Naive thymus-derived CD4-positive, alpha-beta T cell (primary cell): ENCODE measurements at regions of chr1 and their contacts with region 1.

Region 1: DNA sequence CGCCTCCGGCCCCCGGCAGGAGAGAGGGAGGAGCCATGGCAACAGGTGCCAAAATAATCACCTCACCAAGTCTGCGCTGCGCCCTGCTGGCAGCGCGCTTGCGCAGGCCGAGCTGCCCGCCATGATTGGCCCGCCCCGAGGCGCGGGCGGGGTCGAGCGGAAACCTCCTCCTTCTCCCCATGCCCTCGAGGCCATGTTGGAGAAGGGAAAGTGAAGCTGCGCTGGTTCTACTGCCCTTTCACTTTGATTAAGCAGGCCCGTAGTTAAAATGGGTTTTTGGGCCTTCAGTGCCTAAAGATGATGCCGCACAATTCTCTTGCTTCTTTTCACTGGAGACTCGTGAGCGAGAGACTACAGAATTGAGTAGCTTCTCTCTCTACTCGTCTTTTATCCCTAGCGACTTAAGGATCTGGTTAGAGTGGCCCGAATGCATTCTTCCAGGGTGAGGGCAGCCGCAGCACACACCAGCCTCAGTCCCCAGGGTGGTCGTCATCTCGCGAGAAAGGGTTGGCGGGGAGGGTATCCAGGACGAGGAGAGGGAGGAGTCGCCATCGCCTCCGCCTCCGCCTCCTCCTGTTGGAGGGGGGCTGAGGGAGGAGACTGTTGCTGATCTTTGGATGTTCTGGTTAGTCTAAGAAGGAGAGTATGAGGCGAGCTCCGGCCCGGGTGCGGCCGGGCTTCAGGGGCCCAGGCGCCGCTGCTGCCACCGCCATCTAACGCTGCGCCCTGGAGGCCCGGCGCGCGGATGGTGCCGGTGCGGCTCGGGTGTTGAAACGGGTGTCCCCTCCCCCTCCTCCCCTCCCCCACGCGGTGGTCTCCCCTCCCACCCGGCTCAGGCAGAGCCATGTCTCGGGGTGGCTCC is at the start of gene DCAF6:
- DNase-seq: peak; percentile 94 to 99 (median 99)
- ATAC-seq: peak; percentile 89
- H3K4me3 ChIP-seq: peak within 1 kb of the TSS; percentile 89
- H3K4me3 Mint-ChIP-seq: peak within 1 kb of the TSS; percentile 90 to 99 (median 96)
- H3K27ac ChIP-seq: peak within 1 kb of the TSS; percentile 89
- H3K27ac Mint-ChIP-seq: peak within 1 kb of the TSS; percentile 90 to 100 (median 99)
- H3K4me1 ChIP-seq: peaks cover 18 to 31% of the 10 kb centered on the region in 2 donors
- H3K4me1 Mint-ChIP-seq: peaks cover 29 to 58% (median 40%) of the 10 kb centered on the region in 7 donors
- H3K27me3 ChIP-seq: no peaks in the 10 kb centered on the region
- H3K27me3 Mint-ChIP-seq: no peaks in the 10 kb centered on the region
- total RNA-seq, gene DCAF6: 27.4 to 32.7 (median 29.1) TPM

Region 2: DNA sequence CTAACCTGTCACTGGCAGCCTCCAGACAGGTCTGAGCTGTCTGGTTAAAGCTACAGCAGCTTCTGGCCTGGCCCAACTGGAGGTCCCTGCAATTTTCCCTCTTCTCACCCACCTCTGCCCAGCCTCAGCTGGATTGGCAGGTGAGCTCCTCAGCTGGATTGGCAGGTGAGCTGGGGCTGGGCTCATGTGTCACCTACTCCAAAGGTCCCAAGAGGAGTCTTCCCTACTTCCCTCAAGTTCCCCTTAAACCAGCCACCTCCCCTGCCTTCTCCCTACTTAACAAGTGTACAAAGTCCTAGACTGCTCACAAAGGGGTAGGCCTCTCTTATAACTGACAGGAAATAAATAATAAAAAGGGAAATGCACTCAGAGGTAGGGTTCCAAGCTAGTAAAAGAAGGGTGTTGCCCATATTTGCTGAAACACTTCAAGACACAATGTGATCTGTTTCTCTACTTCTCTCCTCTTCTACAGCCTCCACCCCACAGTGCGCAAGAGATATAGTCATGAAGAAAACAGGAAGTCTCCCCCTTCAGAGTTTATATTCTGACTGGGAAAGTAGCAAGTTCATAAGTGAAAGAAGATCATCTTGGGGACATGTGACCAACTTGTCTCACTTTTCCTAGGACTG is 845.9 kb before region 1 on chr1 and contains the start of gene GPA33:
- CTCF ChIA-PET with region 1: no interaction called
- POLR2A ChIA-PET with region 1: no interaction called
- intact Hi-C with region 1: loop called in 1 of 2 experiments (anchors 2 kb)
- DNase-seq: peak in 7 of 9 donors; percentile 71 to 89 (median 83)
- ATAC-seq: peak; percentile 95
- H3K4me3 ChIP-seq: peak within 1 kb of the TSS; percentile 45
- H3K4me3 Mint-ChIP-seq: peak within 1 kb of the TSS in 9 of 10 donors; percentile 63 to 93 (median 86)
- H3K27ac ChIP-seq: peak within 1 kb of the TSS; percentile 83
- H3K27ac Mint-ChIP-seq: peak within 1 kb of the TSS; percentile 95 to 100 (median 100)
- H3K4me1 ChIP-seq: peaks cover 25 to 33% of the 10 kb centered on the region in 2 donors
- H3K4me1 Mint-ChIP-seq: peaks cover 18 to 80% (median 34%) of the 10 kb centered on the region in 7 donors
- H3K27me3 ChIP-seq: no peaks in the 10 kb centered on the region
- H3K27me3 Mint-ChIP-seq: no peaks in the 10 kb centered on the region
- total RNA-seq, gene GPA33: 5.4 to 32.6 (median 11.3) TPM

Region 3: GRCh38 chr1:167627865-167628641 is 308.2 kb before region 1 on chr1:
- CTCF ChIA-PET with region 1: no interaction called
- POLR2A ChIA-PET with region 1: interaction called, 4 read pairs
- intact Hi-C with region 1: loop called (anchors 1 to 5 kb)
- DNase-seq: peak; percentile 33 to 84 (median 73)
- ATAC-seq: peak; percentile 84
- H3K4me3 ChIP-seq: peak overlapping the region; percentile 48
- H3K4me3 Mint-ChIP-seq: peak overlapping the region; percentile 82 to 99 (median 92)
- H3K27ac ChIP-seq: peak overlapping the region; percentile 94
- H3K27ac Mint-ChIP-seq: peak overlapping the region; percentile 85 to 98 (median 95)
- H3K4me1 ChIP-seq: peaks cover 44 to 46% of the 10 kb centered on the region in 2 donors
- H3K4me1 Mint-ChIP-seq: peaks cover 48 to 69% (median 63%) of the 10 kb centered on the region in 7 donors
- H3K27me3 ChIP-seq: no peaks in the 10 kb centered on the region
- H3K27me3 Mint-ChIP-seq: no peaks in the 10 kb centered on the region

Region 4: DNA sequence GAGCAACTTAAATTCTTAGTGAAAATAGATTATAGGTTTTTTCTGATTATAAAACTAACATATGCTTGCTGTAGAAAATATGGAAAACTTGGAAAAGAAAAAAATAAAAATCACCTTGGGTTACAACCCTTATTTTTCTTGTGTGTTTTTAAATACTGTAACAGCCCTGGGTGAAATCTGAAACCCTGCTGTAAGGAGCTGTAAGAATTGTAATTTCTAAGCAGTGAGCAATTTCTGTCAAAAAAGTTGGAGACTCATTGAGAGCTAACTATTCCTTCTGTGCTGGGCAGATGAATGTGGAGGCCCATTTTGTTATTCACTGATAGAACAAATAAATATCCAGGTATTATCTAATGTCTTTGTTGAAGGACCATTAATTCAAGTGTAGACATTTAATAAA is 65.0 kb before region 1 on chr1:
- CTCF ChIA-PET with region 1: no interaction called
- POLR2A ChIA-PET with region 1: no interaction called
- intact Hi-C with region 1: no loop called
- DNase-seq: no peak
- ATAC-seq: no peak
- H3K4me3 ChIP-seq: no peak overlapping the region
- H3K4me3 Mint-ChIP-seq: no peak overlapping the region
- H3K27ac ChIP-seq: no peak overlapping the region
- H3K27ac Mint-ChIP-seq: no peak overlapping the region
- H3K4me1 ChIP-seq: no peaks in the 10 kb centered on the region
- H3K4me1 Mint-ChIP-seq: no peaks in the 10 kb centered on the region
- H3K27me3 ChIP-seq: no peaks in the 10 kb centered on the region
- H3K27me3 Mint-ChIP-seq: no peaks in the 10 kb centered on the region

Region 5: GRCh38 chr1:167899253-167899681 is 37.0 kb before region 1 on chr1:
- CTCF ChIA-PET with region 1: no interaction called
- POLR2A ChIA-PET with region 1: no interaction called
- intact Hi-C with region 1: no loop called
- DNase-seq: no peak
- ATAC-seq: no peak
- H3K4me3 ChIP-seq: no peak overlapping the region
- H3K4me3 Mint-ChIP-seq: no peak overlapping the region
- H3K27ac ChIP-seq: no peak overlapping the region
- H3K27ac Mint-ChIP-seq: no peak overlapping the region
- H3K4me1 ChIP-seq: no peaks in the 10 kb centered on the region
- H3K4me1 Mint-ChIP-seq: no peaks in the 10 kb centered on the region
- H3K27me3 ChIP-seq: no peaks in the 10 kb centered on the region
- H3K27me3 Mint-ChIP-seq: peaks cover 0 to under 1% (median 0%) of the 10 kb centered on the region in 5 donors

Region 6: DNA sequence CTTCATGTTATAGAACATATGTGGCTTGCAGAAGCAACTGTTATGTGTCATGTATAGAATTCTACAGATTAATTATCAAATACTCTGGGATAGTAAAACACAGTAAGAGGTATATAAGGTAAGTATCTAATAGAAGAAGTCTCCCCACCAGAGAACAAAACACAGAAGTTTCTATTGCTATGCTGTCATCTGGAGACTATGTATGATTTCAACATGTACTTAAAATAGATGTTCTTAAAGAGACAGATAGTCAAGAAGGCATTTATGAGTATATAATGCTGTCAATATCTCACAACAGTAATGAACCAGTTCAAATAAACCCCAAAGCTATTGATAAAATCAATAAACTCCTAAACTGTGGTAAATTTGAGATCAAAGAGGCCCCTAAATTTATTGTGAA is 14.3 kb before region 1 on chr1:
- CTCF ChIA-PET with region 1: no interaction called
- POLR2A ChIA-PET with region 1: interaction called, 3 read pairs
- intact Hi-C with region 1: loop called (anchors 1 to 2 kb)
- DNase-seq: no peak
- ATAC-seq: no peak
- H3K4me3 ChIP-seq: no peak overlapping the region
- H3K4me3 Mint-ChIP-seq: no peak overlapping the region
- H3K27ac ChIP-seq: no peak overlapping the region
- H3K27ac Mint-ChIP-seq: no peak overlapping the region
- H3K4me1 ChIP-seq: no peaks in the 10 kb centered on the region
- H3K4me1 Mint-ChIP-seq: peaks cover 3 to 23% (median 12%) of the 10 kb centered on the region in 7 donors
- H3K27me3 ChIP-seq: no peaks in the 10 kb centered on the region
- H3K27me3 Mint-ChIP-seq: no peaks in the 10 kb centered on the region

Region 7: GRCh38 chr1:167991546-167991945 is 55.2 kb after region 1 on chr1:
- CTCF ChIA-PET with region 1: interaction called, 4 read pairs
- POLR2A ChIA-PET with region 1: no interaction called
- intact Hi-C with region 1: loop called in 1 of 2 experiments (anchors 5 kb)
- DNase-seq: no peak
- ATAC-seq: no peak
- H3K4me3 ChIP-seq: no peak overlapping the region
- H3K4me3 Mint-ChIP-seq: no peak overlapping the region
- H3K27ac ChIP-seq: no peak overlapping the region
- H3K27ac Mint-ChIP-seq: peak overlapping the region in 1 of 9 donors; percentile 62
- H3K4me1 ChIP-seq: no peaks in the 10 kb centered on the region
- H3K4me1 Mint-ChIP-seq: peaks cover 0 to 7% (median 0%) of the 10 kb centered on the region in 7 donors
- H3K27me3 ChIP-seq: no peaks in the 10 kb centered on the region
- H3K27me3 Mint-ChIP-seq: no peaks in the 10 kb centered on the region

Region 8: GRCh38 chr1:168225476-168226190 is 289.3 kb after region 1 on chr1 and contains the start of gene SFT2D2:
- CTCF ChIA-PET with region 1: no interaction called
- POLR2A ChIA-PET with region 1: interaction called, 3 read pairs
- intact Hi-C with region 1: loop called (anchors 5 kb)
- DNase-seq: peak; percentile 71 to 86 (median 83)
- ATAC-seq: peak; percentile 97
- H3K4me3 ChIP-seq: peak within 1 kb of the TSS; percentile 88
- H3K4me3 Mint-ChIP-seq: peak within 1 kb of the TSS; percentile 92 to 98 (median 96)
- H3K27ac ChIP-seq: peak within 1 kb of the TSS; percentile 85
- H3K27ac Mint-ChIP-seq: peak within 1 kb of the TSS; percentile 81 to 98 (median 92)
- H3K4me1 ChIP-seq: peaks cover 14 to 15% of the 10 kb centered on the region in 2 donors
- H3K4me1 Mint-ChIP-seq: peaks cover 30 to 56% (median 45%) of the 10 kb centered on the region in 7 donors
- H3K27me3 ChIP-seq: no peaks in the 10 kb centered on the region
- H3K27me3 Mint-ChIP-seq: peaks cover 0 to 7% (median 4%) of the 10 kb centered on the region in 5 donors
- total RNA-seq, gene SFT2D2: 46.9 to 79.8 (median 51.3) TPM

Region 9: GRCh38 chr1:169794530-169795416 is 1858.5 kb after region 1 on chr1 and contains the start of gene METTL18:
- CTCF ChIA-PET with region 1: no interaction called
- POLR2A ChIA-PET with region 1: interaction called, 6 read pairs
- intact Hi-C with region 1: loop called in 1 of 2 experiments (anchors 2 kb)
- DNase-seq: peak; percentile 72 to 96 (median 92)
- ATAC-seq: peak; percentile 100
- H3K4me3 ChIP-seq: peak within 1 kb of the TSS; percentile 98
- H3K4me3 Mint-ChIP-seq: peak within 1 kb of the TSS; percentile 90 to 100 (median 100)
- H3K27ac ChIP-seq: peak within 1 kb of the TSS; percentile 94
- H3K27ac Mint-ChIP-seq: peak within 1 kb of the TSS; percentile 97 to 100 (median 99)
- H3K4me1 ChIP-seq: peaks cover 10 to 28% of the 10 kb centered on the region in 2 donors
- H3K4me1 Mint-ChIP-seq: peaks cover 26 to 60% (median 56%) of the 10 kb centered on the region in 7 donors
- H3K27me3 ChIP-seq: no peaks in the 10 kb centered on the region
- H3K27me3 Mint-ChIP-seq: no peaks in the 10 kb centered on the region
- total RNA-seq, gene METTL18: 4.9 to 21.1 (median 13.4) TPM